ENCODE measurements at regions of chr1 and their contacts with region 1.

Region 1: GRCh38 chr1:198970912-198971311 is 332.1 kb downstream of the PTPRC start:
- DNase-seq: no peak
- ATAC-seq: peak; percentile 79
- H3K4me3 ChIP-seq: no peak overlapping the region
- H3K4me3 Mint-ChIP-seq: no peak overlapping the region
- H3K27ac ChIP-seq: no peak overlapping the region
- H3K27ac Mint-ChIP-seq: no peak overlapping the region
- H3K4me1 ChIP-seq: peaks cover 0 to 3% of the 10 kb centered on the region in 2 donors
- H3K4me1 Mint-ChIP-seq: peaks cover 2 to 48% (median 34%) of the 10 kb centered on the region in 7 donors
- H3K27me3 ChIP-seq: no peaks in the 10 kb centered on the region
- H3K27me3 Mint-ChIP-seq: peaks cover 0 to 4% (median 0%) of the 10 kb centered on the region in 5 donors

Region 2: GRCh38 chr1:198959032-198959431 is 11.9 kb before region 1 on chr1:
- CTCF ChIA-PET with region 1: no interaction called
- POLR2A ChIA-PET with region 1: interaction called, 3 read pairs
- intact Hi-C with region 1: loop called in 1 of 2 experiments (anchors 2 kb)
- DNase-seq: peak in 6 of 9 donors; percentile 27 to 56 (median 42)
- ATAC-seq: peak; percentile 71
- H3K4me3 ChIP-seq: no peak overlapping the region
- H3K4me3 Mint-ChIP-seq: peak overlapping the region in 5 of 10 donors; percentile 20 to 49 (median 31)
- H3K27ac ChIP-seq: no peak overlapping the region
- H3K27ac Mint-ChIP-seq: peak overlapping the region; percentile 3 to 73 (median 59)
- H3K4me1 ChIP-seq: peaks cover 6 to 20% of the 10 kb centered on the region in 2 donors
- H3K4me1 Mint-ChIP-seq: peaks cover 18 to 41% (median 36%) of the 10 kb centered on the region in 7 donors
- H3K27me3 ChIP-seq: no peaks in the 10 kb centered on the region
- H3K27me3 Mint-ChIP-seq: no peaks in the 10 kb centered on the region